Activated naive CD8-positive, alpha-beta T cell treated with anti-CD3 and anti-CD28 coated beads, Interleukin-2, amount 10 ng/mL, durations not matched to agents 7 days and 5 days (primary cell): ENCODE measurements at regions of chr11 and their contacts with region 1.

Region 1: DNA sequence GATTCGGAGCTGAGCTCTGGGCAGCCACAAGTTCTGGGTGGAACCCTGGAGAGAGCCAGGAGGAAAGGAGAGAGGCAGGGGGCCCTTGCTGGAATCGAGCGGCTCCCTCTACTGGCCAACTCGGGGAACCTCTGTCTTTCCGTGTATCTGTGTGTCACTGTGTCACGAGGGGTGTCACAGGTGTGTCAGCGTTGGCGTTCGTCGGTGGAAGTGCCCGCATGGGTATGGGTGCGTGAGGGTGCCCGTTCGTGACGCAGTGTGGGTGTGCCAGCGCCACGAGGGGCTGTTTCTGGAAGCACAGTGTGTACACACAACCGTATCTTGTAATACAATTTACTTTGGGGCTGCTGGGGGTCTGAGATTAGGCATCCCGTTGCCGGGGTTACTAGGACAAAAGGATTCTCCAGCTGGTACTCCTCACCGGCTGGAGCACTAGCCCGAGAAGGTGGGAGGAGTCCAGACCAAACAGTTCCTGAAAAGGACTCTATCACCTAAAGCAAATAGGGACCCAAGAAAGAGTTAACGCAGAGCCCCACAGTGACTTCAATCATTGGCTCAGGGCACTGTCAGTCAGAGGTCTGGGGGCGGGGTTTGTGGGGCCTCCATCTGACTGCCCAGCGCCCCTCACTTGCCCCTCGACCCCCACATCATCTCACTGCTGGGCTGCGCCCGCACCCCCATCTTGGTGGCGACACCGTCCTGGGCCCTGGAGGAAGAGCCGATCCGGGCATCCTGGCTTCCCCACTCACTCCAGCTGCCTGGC is 2.6 kb upstream of the BCL9L start:
- DNase-seq: peak; percentile 96
- ATAC-seq: peak; percentile 46
- H3K4me3 Mint-ChIP-seq: peak overlapping the region; percentile 99
- H3K27ac Mint-ChIP-seq: peak overlapping the region; percentile 93
- H3K4me1 Mint-ChIP-seq: peaks cover 50% of the 10 kb centered on the region
- H3K27me3 Mint-ChIP-seq: no peaks in the 10 kb centered on the region

Region 2: DNA sequence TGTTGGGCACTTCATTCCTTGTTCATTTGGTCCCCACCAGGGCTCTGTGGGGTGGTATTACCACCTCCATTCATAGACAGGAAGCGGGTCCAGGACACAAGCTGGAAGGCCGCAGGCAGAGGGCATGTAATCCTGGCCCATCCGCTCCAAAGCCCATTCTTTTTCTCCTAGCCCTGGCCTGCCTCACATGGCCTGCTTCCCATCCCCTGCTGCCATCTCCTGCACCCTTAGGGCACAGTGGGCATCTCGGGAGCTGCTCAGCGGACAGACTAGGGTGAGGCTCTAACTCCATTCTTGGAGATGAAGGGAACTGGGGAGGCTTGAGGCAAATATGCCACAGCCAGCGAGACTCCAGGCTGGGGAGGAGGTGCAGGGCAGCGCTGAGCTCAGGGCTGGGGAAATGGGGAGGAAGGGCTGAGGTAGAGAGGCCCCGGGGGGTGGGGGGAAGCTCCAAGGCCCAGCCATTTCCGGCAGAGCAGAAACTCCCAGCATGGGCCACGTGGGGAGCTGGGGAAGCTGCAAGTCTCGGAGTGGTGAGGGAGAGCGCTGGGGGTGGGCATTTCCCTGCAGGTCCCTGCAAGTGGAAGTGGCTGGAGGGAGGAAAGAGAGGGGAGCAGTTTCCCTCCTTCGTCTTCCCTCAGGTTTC is 11.8 kb after region 1 on chr11:
- POLR2A ChIA-PET with region 1: interaction called, 20 read pairs
- DNase-seq: peak; percentile 69
- ATAC-seq: peak; percentile 95
- H3K4me3 Mint-ChIP-seq: peak overlapping the region; percentile 58
- H3K27ac Mint-ChIP-seq: peak overlapping the region; percentile 80
- H3K4me1 Mint-ChIP-seq: peaks cover 30% of the 10 kb centered on the region
- H3K27me3 Mint-ChIP-seq: peaks cover 3% of the 10 kb centered on the region